Right cardiac atrium (tissue), 5 donors: ENCODE measurements at regions of chr17 and their contacts with region 1.

Region 1: GRCh38 chr17:35747540-35748017 is 5.5 kb downstream of the GAS2L2 start:
- DNase-seq: peak; percentile 74 to 91 (median 84)
- ATAC-seq: peak; percentile 69 to 73
- H3K4me3 ChIP-seq: no peak overlapping the region
- H3K27ac ChIP-seq: no peak overlapping the region
- H3K4me1 ChIP-seq: peaks cover 1% of the 10 kb centered on the region
- H3K27me3 ChIP-seq: no peaks in the 10 kb centered on the region

Region 2: GRCh38 chr17:35312790-35313711 is 434.5 kb before region 1 on chr17:
- intact Hi-C with region 1: loop called in 1 of 4 experiments (anchors 10 kb)
- DNase-seq: peak; percentile 37 to 70 (median 60)
- ATAC-seq: peak; percentile 88 to 94
- H3K4me3 ChIP-seq: peak overlapping the region; percentile 42
- H3K27ac ChIP-seq: peak overlapping the region; percentile 80
- H3K4me1 ChIP-seq: peaks cover 10% of the 10 kb centered on the region
- H3K27me3 ChIP-seq: no peaks in the 10 kb centered on the region

Region 3: DNA sequence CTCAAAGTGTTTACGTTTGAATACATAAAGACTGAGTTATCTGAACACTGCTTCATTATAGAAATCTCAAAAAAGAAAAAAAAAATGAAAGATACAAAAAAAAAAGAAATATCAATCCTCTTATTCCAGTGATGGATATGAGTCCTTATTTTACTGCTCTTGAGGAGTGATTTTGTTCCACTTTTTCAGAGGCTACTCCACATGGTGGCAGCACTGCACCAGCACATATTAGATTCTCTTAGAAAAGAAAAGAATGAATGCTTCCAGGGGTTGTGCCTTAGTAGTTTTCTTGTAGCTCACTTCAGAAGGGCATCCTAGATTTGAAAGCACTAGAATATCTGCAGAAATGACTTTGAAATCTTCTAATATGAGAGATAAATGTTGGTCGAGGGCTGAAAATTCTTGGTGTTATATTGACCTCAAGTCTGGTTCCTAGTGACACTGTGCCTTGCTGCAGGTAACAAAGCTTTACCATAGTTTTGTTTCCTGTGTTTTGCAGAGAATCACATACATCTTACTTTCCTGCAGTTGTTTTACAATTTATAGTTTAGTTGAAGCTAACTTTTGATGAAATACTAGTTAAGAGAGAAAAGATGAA is 134.6 kb before region 1 on chr17:
- intact Hi-C with region 1: loop called (anchors 2 to 5 kb)
- DNase-seq: peak in 2 of 3 donors; percentile 38 to 71
- ATAC-seq: no peak
- H3K4me3 ChIP-seq: no peak overlapping the region
- H3K27ac ChIP-seq: no peak overlapping the region
- H3K4me1 ChIP-seq: no peaks in the 10 kb centered on the region
- H3K27me3 ChIP-seq: no peaks in the 10 kb centered on the region

Region 4: DNA sequence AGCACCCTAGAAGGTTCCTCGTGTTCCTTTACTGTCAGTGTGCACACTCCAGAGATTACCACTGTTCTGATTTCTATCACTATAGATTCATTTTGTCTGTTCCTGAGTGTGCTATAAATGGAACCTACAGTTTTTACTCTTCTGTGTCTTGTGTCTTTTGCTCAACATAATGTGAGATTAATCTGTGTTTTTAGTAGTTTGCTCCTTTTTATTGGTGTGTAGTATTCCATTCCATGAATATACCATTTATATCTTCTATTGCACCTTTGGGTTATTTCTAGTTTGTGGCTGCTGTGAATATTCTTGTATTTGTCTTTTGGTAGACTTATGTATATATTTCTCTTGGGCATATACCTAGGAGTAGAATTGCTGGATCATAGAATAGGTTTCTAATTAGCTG is 92.3 kb before region 1 on chr17:
- intact Hi-C with region 1: loop called (anchors 5 to 10 kb)
- DNase-seq: no peak
- ATAC-seq: no peak
- H3K4me3 ChIP-seq: no peak overlapping the region
- H3K27ac ChIP-seq: no peak overlapping the region
- H3K4me1 ChIP-seq: no peaks in the 10 kb centered on the region
- H3K27me3 ChIP-seq: no peaks in the 10 kb centered on the region

Region 5: DNA sequence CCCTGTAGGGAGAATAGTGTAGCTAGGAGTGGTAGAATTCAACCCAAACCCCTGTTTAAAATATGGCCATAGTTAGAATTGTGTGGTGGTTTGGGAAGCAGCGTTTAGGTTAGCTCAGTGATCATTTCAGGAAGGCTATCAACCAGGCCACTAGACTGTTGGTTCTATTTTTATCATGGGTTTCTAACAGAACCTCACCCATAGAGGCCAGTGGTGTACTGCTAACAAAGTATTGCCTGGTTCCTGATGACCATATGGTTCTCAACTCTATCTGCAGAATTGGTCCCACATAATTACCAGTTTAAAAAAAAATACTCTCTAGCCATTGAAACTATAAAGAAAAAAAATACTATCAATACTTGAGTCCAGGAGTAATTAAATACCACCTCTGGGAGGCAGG is 86.7 kb before region 1 on chr17:
- intact Hi-C with region 1: loop called (anchors 5 to 10 kb)
- DNase-seq: no peak
- ATAC-seq: peak; percentile 57 to 75
- H3K4me3 ChIP-seq: no peak overlapping the region
- H3K27ac ChIP-seq: no peak overlapping the region
- H3K4me1 ChIP-seq: no peaks in the 10 kb centered on the region
- H3K27me3 ChIP-seq: no peaks in the 10 kb centered on the region

Region 6: DNA sequence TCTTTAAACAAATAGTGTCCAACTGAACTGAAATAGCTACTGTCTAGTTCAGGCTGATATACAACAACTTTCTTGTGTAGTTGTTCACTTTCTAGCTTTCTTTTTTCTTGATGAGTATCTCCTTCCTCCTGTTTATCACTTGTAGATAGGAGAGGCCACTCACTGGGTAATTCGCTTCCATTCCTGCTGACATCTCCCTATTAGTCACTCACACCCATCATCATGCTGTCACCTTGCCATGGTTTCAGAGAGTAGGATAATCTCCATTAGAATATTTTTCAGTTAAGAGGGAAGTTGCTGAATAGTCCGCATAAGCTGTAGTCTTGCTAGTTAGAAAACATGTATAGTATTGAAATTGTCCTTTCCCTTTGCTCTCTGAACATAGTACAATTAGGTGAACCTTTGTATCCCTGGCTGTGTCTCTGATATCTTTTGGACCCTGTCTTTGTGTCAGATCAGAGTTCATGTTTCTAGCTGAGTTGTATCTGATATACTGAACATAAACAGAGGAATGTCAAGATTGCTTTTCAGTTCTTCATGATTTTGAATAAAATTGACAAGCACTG is 80.5 kb before region 1 on chr17:
- intact Hi-C with region 1: loop called in 3 of 4 experiments (anchors 5 to 10 kb)
- DNase-seq: no peak
- ATAC-seq: peak in 1 of 2 donors; percentile 20
- H3K4me3 ChIP-seq: no peak overlapping the region
- H3K27ac ChIP-seq: no peak overlapping the region
- H3K4me1 ChIP-seq: peaks cover 3% of the 10 kb centered on the region
- H3K27me3 ChIP-seq: no peaks in the 10 kb centered on the region

Region 7: GRCh38 chr17:35808962-35809854 is 61.6 kb after region 1 on chr17 and contains the start of gene TAF15:
- intact Hi-C with region 1: no loop called
- DNase-seq: peak; percentile 96 to 98 (median 98)
- ATAC-seq: peak; percentile 98 to 99
- H3K4me3 ChIP-seq: peak within 1 kb of the TSS; percentile 86
- H3K27ac ChIP-seq: peak within 1 kb of the TSS; percentile 98
- H3K4me1 ChIP-seq: no peaks in the 10 kb centered on the region
- H3K27me3 ChIP-seq: no peaks in the 10 kb centered on the region
- total RNA-seq, gene TAF15: 96.5 to 125 (median 106) TPM